Activated CD4-positive, alpha-beta T cell treated with anti-CD3 and anti-CD28 coated beads for 36 hours (primary cell): ENCODE measurements at regions of chr5 and their contacts with region 1.

Region 1: DNA sequence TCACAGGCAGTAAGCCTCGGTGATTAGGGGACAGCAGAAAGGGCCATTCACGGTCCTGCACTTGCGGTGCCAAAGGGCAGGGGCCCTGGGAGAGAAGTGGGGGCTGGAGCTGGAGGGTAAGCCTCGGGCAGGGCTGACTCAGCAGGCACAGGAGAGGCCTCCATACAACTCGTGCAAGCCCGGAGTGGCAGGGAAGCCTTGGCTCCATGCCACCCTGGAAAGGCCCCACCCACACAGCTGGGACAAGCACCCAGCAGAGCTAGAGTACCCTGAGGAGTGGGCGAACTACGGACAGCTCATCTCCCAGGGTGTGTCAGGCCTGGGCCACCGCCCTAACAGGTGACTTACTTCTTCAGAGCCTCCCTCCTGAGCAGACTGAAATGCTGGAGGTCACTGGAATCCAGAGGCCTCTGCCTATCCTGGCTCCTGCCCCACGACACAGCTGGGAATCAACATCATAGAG is 5.6 kb upstream of the CAMK2A start:
- DNase-seq: peak; percentile 26
- ATAC-seq: peak; percentile 23
- H3K4me3 Mint-ChIP-seq: no peak overlapping the region
- H3K27ac Mint-ChIP-seq: no peak overlapping the region
- H3K4me1 Mint-ChIP-seq: no peaks in the 10 kb centered on the region
- H3K27me3 Mint-ChIP-seq: peaks cover 4% of the 10 kb centered on the region

Region 2: DNA sequence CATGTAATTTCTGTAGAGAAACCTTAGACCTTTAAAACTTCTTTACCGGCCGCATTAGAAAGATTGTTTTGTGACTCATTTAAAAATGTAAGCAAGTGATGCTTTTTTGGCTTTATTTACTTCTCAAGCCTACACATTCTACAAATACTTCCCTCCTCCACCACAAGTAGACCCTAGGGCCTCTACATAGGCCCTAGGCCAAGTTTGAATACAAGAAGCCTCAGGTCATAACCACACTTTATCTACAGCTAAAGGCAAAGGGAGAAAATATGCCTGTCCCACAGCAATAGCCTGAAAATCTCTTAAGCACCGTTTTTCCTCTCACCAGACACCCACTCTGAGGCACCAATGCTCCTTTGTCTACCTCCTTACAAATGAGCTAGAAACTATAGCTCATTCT is 797.8 kb before region 1 on chr5:
- CTCF ChIA-PET with region 1: no interaction called
- POLR2A ChIA-PET with region 1: no interaction called
- intact Hi-C with region 1: no loop called
- DNase-seq: no peak
- ATAC-seq: no peak
- H3K4me3 Mint-ChIP-seq: no peak overlapping the region
- H3K27ac Mint-ChIP-seq: peak overlapping the region; percentile 37
- H3K4me1 Mint-ChIP-seq: no peaks in the 10 kb centered on the region
- H3K27me3 Mint-ChIP-seq: no peaks in the 10 kb centered on the region

Region 3: GRCh38 chr5:149878039-149878747 is 417.0 kb before region 1 on chr5:
- CTCF ChIA-PET with region 1: no interaction called
- POLR2A ChIA-PET with region 1: no interaction called
- intact Hi-C with region 1: loop called in 1 of 2 experiments (anchors 10 kb)
- DNase-seq: no peak
- ATAC-seq: no peak
- H3K4me3 Mint-ChIP-seq: no peak overlapping the region
- H3K27ac Mint-ChIP-seq: no peak overlapping the region
- H3K4me1 Mint-ChIP-seq: no peaks in the 10 kb centered on the region
- H3K27me3 Mint-ChIP-seq: peaks cover 7% of the 10 kb centered on the region